ENCODE measurements at regions of chr2 and their contacts with region 1.

Region 1: DNA sequence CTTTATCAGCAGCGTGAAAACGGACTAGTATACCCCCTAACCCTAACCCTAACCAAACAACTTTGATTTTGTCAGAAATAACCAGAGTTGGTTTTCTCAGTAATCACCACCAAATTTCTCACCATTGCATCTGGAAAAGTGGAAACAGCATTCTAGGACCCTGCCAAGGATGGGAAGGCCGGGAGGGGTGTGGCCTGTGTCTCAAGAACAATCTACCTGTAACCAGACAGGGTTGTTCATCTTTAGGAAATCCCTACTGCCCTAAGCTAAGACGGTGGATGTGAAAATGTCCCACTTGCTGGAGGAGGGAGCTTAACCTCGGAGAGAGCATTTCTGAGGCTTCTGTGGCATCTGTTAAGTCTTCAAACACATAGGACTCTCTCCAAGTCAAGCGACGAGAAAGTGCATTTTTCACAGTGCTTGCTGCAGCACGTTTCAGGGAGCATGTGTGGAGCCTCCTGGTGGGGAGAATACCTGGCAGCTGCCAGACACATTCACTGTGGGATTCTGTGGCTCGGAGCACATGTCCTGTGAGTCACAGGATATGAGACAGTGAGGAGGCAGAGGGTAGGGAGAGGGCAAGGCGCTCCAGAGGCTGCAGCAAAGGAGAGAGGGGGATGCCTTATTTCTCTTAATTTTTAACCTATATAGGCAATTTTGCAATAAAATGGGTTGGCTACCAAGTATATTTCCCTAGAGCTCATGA is 207.5 kb downstream of the SPP2 start:
- DNase-seq: peak; percentile 72 to 84
- H3K4me3 ChIP-seq: no peak overlapping the region
- H3K4me3 Mint-ChIP-seq: peak overlapping the region; percentile 47
- H3K27ac Mint-ChIP-seq: peak overlapping the region; percentile 89
- H3K4me1 ChIP-seq: peaks cover 45% of the 10 kb centered on the region
- H3K4me1 Mint-ChIP-seq: peaks cover 17% of the 10 kb centered on the region
- H3K27me3 ChIP-seq: no peaks in the 10 kb centered on the region
- H3K27me3 Mint-ChIP-seq: no peaks in the 10 kb centered on the region
- CTCF ChIP-seq: peak; percentile 46 to 70

Region 2: DNA sequence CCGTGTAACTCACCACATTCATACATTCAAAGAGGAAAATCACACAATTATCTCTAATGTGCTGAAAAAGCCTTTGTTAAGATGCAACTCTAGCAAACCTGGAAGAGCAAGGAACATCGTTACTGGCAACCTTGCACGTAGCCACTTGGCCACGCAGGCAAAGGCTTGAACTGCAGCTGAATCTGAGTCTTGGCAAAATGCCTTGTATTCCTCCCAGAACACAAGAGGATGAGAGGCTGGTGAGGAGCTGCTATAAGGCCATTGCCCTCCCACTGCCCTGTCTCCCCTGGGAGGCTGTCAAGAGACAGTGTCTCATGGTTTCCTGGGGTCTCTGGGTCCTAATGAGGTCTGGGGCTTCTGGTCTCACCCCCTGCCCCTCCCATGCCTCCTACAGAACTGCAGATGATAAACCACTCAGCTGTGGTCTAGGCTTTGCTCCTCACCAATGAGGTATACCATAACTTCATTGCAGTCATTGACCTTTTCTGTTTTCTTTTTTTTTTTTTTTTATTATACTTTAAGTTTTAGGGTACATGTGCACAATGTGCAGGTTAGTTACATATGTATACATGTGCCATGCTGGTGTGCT is 66.1 kb before region 1 on chr2:
- CTCF ChIA-PET with region 1: interaction called, 7 read pairs
- POLR2A ChIA-PET with region 1: no interaction called
- intact Hi-C with region 1: loop called (anchors 1 kb)
- DNase-seq: no peak
- H3K4me3 ChIP-seq: no peak overlapping the region
- H3K4me3 Mint-ChIP-seq: no peak overlapping the region
- H3K27ac Mint-ChIP-seq: no peak overlapping the region
- H3K4me1 ChIP-seq: peaks cover 22% of the 10 kb centered on the region
- H3K4me1 Mint-ChIP-seq: peaks cover 28% of the 10 kb centered on the region
- H3K27me3 ChIP-seq: no peaks in the 10 kb centered on the region
- H3K27me3 Mint-ChIP-seq: no peaks in the 10 kb centered on the region
- CTCF ChIP-seq: no peak

Region 3: GRCh38 chr2:234211797-234212196 is 46.2 kb before region 1 on chr2:
- CTCF ChIA-PET with region 1: interaction called, 5 read pairs
- POLR2A ChIA-PET with region 1: no interaction called
- intact Hi-C with region 1: loop called (anchors 5 kb)
- DNase-seq: no peak
- H3K4me3 ChIP-seq: no peak overlapping the region
- H3K4me3 Mint-ChIP-seq: peak overlapping the region; percentile 50
- H3K27ac Mint-ChIP-seq: peak overlapping the region; percentile 47
- H3K4me1 ChIP-seq: peaks cover 21% of the 10 kb centered on the region
- H3K4me1 Mint-ChIP-seq: peaks cover 16% of the 10 kb centered on the region
- H3K27me3 ChIP-seq: no peaks in the 10 kb centered on the region
- H3K27me3 Mint-ChIP-seq: no peaks in the 10 kb centered on the region
- CTCF ChIP-seq: no peak

Region 4: DNA sequence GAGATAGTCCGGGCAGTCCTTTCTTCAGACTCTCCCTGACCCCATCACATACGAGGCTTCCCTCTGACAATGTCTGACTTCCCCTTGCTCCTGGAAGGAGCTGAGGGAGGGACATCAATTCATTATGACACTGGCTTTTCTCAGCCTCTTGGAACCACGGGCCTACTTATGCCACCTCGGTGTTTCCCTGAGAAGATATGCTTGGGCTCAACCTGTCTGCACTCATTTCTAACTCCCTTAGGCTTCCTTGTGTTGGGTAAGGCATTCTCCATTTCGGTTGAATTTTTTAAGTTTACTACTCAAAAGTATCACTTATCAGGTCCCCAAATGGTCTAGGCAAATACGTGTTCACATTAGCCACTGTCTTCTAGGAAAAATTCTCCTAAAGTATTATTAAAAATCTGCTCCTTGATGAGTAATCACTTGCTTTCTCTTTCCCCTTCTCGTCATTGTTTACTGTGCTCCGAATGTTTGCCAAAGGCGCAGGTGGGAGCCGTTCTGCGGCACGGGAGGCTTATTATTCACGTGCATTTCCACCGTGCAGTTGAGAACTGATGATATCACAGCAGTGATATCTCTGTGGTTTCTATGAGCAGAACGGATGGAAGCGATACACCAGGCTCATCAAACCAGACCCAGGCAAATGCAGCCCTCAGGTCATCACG is 205.7 kb after region 1 on chr2:
- CTCF ChIA-PET with region 1: no interaction called
- POLR2A ChIA-PET with region 1: no interaction called
- intact Hi-C with region 1: loop called (anchors 1 kb)
- DNase-seq: peak; percentile 51 to 67
- H3K4me3 ChIP-seq: no peak overlapping the region
- H3K4me3 Mint-ChIP-seq: peak overlapping the region; percentile 47
- H3K27ac Mint-ChIP-seq: peak overlapping the region; percentile 95
- H3K4me1 ChIP-seq: peaks cover 70% of the 10 kb centered on the region
- H3K4me1 Mint-ChIP-seq: peaks cover 33% of the 10 kb centered on the region
- H3K27me3 ChIP-seq: no peaks in the 10 kb centered on the region
- H3K27me3 Mint-ChIP-seq: no peaks in the 10 kb centered on the region
- CTCF ChIP-seq: no peak

Region 5: DNA sequence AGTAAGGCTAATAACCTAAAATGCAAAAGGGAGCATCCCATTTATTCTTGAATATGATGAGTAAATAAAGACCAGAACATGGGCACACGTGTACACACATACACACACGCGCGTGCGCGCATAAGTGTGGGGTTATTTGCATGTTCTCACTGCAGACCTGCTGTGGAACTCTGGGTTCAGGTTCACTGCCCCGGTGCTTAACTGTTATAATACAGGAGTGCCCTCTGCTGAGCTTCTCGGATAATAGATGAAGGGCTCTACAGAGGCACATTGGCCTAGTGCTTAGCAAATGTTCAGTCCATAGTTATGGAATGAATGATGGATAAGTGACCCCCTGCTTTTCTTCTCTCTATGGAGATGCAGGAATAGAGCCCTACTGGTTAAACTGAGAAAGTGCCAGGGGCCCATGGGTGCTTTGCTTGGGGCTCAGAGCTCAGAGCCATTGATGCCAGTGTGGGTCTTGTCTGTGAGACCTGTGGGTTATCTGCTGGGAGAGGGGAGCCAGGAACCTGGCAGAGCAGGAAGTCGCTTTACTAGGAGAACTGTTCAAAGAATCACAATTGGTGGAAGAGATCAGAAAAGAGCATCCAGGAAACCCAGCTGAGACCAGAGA is 242.5 kb after region 1 on chr2:
- CTCF ChIA-PET with region 1: no interaction called
- POLR2A ChIA-PET with region 1: no interaction called
- intact Hi-C with region 1: loop called (anchors 5 kb)
- DNase-seq: peak; percentile 56 to 60
- H3K4me3 ChIP-seq: no peak overlapping the region
- H3K4me3 Mint-ChIP-seq: no peak overlapping the region
- H3K27ac Mint-ChIP-seq: no peak overlapping the region
- H3K4me1 ChIP-seq: peaks cover 6% of the 10 kb centered on the region
- H3K4me1 Mint-ChIP-seq: peaks cover 8% of the 10 kb centered on the region
- H3K27me3 ChIP-seq: no peaks in the 10 kb centered on the region
- H3K27me3 Mint-ChIP-seq: no peaks in the 10 kb centered on the region
- CTCF ChIP-seq: peak; percentile 34 to 46

Measured in Caco-2 (cell line).